CD4-positive, alpha-beta T cell (primary cell): ENCODE measurements at regions of chrX and their contacts with region 1.

Region 1: DNA sequence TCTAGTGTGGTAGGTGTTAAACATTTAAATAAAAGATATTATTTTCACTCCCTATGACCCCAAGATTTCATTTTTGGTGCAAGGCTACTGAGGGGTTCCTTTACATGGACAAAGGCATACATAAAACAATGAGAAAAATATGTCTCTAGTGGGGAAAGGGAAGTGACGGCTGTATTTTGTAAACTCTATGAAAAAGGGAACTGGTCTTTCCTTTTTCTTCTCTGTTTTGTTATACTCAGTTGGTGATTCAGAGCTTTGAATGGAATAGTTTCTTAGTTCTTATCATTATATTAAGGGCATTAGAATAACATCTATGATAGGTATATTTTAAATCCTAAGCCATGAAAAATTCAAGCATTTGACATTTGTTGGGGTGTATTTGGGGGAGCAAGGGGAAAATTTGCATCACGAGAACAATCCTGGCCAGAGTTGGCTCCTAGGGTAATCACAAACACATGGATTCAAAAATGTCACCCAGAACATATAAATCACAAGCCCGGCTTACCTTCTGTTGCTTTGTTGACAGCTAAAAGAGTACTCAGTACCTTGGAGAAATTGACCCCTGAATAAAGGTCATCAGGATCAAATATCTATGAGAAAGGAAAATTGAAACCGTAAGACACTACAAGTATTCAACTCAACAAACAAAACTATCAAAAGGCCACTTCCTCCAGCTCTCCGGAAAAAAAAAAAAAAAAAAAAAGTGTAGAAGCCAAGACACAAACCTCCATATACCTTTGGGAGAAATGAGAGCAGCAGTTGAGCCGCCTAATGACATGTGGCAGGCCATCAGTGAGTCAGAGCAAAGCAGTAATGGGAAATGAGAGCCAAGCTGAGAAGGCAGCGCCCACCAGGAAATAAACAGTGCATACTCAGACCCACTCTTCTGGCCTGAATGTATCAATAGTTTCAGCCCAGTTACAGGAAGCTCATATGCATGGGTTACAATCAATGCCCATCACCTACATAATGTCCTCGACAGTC is 33.4 kb downstream of the ARHGEF6 start:
- DNase-seq: peak in 3 of 14 experiments; percentile 17 to 41 (median 37)
- ATAC-seq: peak; percentile 26
- H3K4me3 ChIP-seq: no peak overlapping the region
- H3K4me3 Mint-ChIP-seq: peak overlapping the region; percentile 26
- H3K27ac ChIP-seq: no peak overlapping the region
- H3K27ac Mint-ChIP-seq: peak overlapping the region; percentile 59
- H3K4me1 ChIP-seq: peaks cover 27% of the 10 kb centered on the region
- H3K4me1 Mint-ChIP-seq: peaks cover 88% of the 10 kb centered on the region
- H3K27me3 ChIP-seq: no peaks in the 10 kb centered on the region
- H3K27me3 Mint-ChIP-seq: no peaks in the 10 kb centered on the region
- CTCF ChIP-seq: no peak

Region 2: DNA sequence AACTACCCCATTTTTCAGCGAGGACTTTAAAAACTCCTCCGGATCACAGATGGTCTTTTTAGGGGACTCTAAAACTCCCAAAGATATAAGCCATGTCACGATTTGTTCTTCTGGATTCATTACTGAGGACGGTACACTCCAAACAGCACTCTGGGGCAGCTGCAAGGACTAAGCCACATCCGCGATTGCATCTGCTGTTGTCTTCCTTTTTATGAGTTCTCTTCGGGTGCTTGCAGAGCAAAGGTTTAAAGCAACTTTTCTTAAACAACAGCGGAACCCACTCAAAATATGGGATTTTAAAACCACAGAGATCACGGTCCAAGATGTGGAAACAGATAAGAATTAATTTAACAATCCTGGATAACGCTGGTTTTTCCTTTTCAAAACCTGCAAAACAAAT is 33.5 kb after region 1 on chrX and contains the start of gene ARHGEF6:
- CTCF ChIA-PET with region 1: no interaction called
- POLR2A ChIA-PET with region 1: no interaction called
- intact Hi-C with region 1: loop called in 1 of 2 experiments (anchors 5 kb)
- DNase-seq: peak in 12 of 14 experiments; percentile 9 to 66 (median 38)
- ATAC-seq: peak; percentile 60
- H3K4me3 ChIP-seq: peak within 1 kb of the TSS; percentile 79
- H3K4me3 Mint-ChIP-seq: peak within 1 kb of the TSS; percentile 98
- H3K27ac ChIP-seq: peak within 1 kb of the TSS; percentile 65 to 84
- H3K27ac Mint-ChIP-seq: peak within 1 kb of the TSS; percentile 95
- H3K4me1 ChIP-seq: peaks cover 29% of the 10 kb centered on the region
- H3K4me1 Mint-ChIP-seq: peaks cover 75% of the 10 kb centered on the region
- H3K27me3 ChIP-seq: no peaks in the 10 kb centered on the region
- H3K27me3 Mint-ChIP-seq: no peaks in the 10 kb centered on the region
- CTCF ChIP-seq: no peak
- total RNA-seq, gene ARHGEF6: 43.3 to 45.3 TPM